CD14-positive monocyte (primary cell): ENCODE measurements at regions of chr4 and their contacts with region 1.

Region 1: GRCh38 chr4:174365018-174365587 is 81.4 kb downstream of the CEP44 start:
- DNase-seq: peak; percentile 20 to 60 (median 49)
- H3K4me3 ChIP-seq: no peak overlapping the region
- H3K4me3 Mint-ChIP-seq: no peak overlapping the region
- H3K27ac ChIP-seq: no peak overlapping the region
- H3K27ac Mint-ChIP-seq: no peak overlapping the region
- H3K4me1 ChIP-seq: no peaks in the 10 kb centered on the region
- H3K4me1 Mint-ChIP-seq: no peaks in the 10 kb centered on the region
- H3K27me3 ChIP-seq: no peaks in the 10 kb centered on the region
- H3K27me3 Mint-ChIP-seq: no peaks in the 10 kb centered on the region
- CTCF ChIP-seq: peak; percentile 74

Region 2: DNA sequence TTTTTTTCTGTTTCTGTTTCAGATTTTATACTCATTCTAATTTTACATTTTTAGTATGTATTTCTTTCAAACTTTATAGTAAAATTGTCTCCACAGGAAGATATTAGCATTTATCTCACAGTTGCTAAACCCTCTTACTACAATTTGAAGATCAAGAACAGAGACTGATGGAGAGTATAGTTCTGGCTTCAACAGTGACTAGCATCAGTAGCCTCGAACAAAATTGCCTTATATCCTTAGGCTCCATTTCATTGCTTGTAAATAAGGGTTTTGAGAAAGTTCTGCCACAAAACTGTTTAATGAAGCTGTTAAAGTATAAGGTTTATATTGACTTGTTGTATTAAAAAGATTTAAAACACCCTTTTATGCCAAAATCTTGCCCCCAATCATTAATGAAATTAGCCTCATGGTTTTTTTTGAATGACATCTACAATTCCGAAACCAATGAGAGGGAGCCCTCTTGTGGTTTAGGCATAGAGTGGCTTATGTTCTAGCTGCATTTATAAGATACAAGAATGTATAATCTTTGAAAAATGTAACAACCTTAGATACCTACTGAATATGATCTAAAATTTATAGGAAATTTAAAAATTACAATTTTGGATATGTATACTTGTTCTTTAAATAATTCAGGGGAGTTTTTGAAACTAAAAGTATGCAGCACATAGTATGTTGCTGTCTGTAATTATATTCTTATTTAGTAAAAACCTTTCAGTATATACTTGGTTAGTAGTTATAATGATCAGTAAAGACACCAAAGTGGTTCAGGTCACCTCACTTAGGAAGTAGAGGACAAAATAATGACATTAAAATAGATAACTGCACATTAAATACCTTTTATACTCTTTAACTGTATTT is 267.0 kb after region 1 on chr4:
- intact Hi-C with region 1: loop called (anchors 2 to 5 kb)
- DNase-seq: peak; percentile 25 to 56 (median 46)
- H3K4me3 ChIP-seq: no peak overlapping the region
- H3K4me3 Mint-ChIP-seq: no peak overlapping the region
- H3K27ac ChIP-seq: no peak overlapping the region
- H3K27ac Mint-ChIP-seq: no peak overlapping the region
- H3K4me1 ChIP-seq: no peaks in the 10 kb centered on the region
- H3K4me1 Mint-ChIP-seq: peaks cover 1% of the 10 kb centered on the region
- H3K27me3 ChIP-seq: no peaks in the 10 kb centered on the region
- H3K27me3 Mint-ChIP-seq: no peaks in the 10 kb centered on the region
- CTCF ChIP-seq: peak; percentile 86

Region 3: GRCh38 chr4:174714393-174715211 is 349.5 kb after region 1 on chr4:
- intact Hi-C with region 1: loop called in 1 of 2 experiments (anchors 10 kb)
- DNase-seq: peak in 2 of 3 donors; percentile 5 to 13
- H3K4me3 ChIP-seq: no peak overlapping the region
- H3K4me3 Mint-ChIP-seq: no peak overlapping the region
- H3K27ac ChIP-seq: no peak overlapping the region
- H3K27ac Mint-ChIP-seq: no peak overlapping the region
- H3K4me1 ChIP-seq: no peaks in the 10 kb centered on the region
- H3K4me1 Mint-ChIP-seq: no peaks in the 10 kb centered on the region
- H3K27me3 ChIP-seq: no peaks in the 10 kb centered on the region
- H3K27me3 Mint-ChIP-seq: no peaks in the 10 kb centered on the region
- CTCF ChIP-seq: peak; percentile 76

Region 4: GRCh38 chr4:176340871-176341685 is 1976.0 kb after region 1 on chr4:
- intact Hi-C with region 1: loop called in 1 of 2 experiments (anchors 10 kb)
- DNase-seq: peak; percentile 13 to 32 (median 18)
- H3K4me3 ChIP-seq: no peak overlapping the region
- H3K4me3 Mint-ChIP-seq: no peak overlapping the region
- H3K27ac ChIP-seq: no peak overlapping the region
- H3K27ac Mint-ChIP-seq: no peak overlapping the region
- H3K4me1 ChIP-seq: no peaks in the 10 kb centered on the region
- H3K4me1 Mint-ChIP-seq: peaks cover 2% of the 10 kb centered on the region
- H3K27me3 ChIP-seq: no peaks in the 10 kb centered on the region
- H3K27me3 Mint-ChIP-seq: peaks cover 0 to 2% (median 1%) of the 10 kb centered on the region in 3 donors
- CTCF ChIP-seq: peak; percentile 74